ENCODE measurements at regions of chr17 and their contacts with region 1.

Region 1: DNA sequence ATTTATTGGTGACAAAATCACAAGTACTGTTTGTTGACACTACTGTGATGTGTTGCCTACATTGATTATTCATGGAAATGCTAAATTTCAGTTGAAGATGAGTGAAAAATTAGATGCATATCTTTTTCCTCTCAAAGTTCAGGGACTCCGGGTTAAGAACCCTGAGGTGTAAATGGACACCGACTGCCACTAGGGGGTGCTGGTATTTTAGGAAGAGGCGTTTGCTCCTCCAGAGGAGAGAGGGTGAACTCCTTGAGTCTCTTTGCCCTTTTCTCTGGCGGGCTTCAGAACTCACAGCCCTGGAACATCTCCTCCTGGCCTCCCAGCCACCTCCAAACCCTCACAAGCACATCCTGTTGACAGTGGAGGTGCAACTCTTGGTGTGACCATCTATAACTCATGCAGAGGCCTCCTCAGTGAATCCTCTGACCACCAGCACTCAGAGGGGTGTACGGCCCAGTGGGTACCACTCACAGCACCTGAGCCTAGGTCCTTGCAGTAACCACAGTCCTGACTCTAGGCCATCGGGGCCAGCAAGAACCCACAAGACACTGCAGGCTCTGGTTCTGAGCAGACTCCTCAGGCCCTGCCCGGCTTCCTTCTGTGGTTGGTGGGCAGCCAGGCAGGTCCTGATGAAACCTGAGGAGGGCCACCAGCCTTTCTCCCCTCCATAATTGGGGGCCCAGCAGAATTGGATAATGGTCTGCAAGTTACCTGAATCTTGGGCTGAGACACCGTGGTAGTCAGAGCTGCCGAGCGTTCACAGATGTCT is 26.2 kb upstream of the PIK3R5 start:
- DNase-seq: no peak
- ATAC-seq: peak; percentile 63

Region 2: DNA sequence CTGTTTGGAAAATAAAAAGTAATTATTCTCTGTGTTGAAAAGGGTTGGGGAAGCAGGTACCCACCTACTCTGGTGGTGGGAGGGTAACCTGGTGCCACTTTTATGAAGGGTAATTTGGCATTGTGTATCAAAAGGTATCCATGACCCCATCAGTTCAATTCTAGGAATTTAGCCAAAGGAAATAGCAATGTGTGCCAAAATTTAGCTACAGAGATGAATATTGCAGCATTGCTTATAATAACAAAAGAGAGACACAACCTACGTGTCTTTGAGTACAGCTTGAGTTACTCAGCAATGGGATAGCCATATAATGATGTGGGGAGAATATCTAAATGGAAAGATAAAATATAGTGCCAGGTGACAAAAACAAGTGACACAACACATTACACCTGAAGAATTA is 200.3 kb after region 1 on chr17:
- intact Hi-C with region 1: no loop called
- DNase-seq: no peak
- ATAC-seq: no peak

Region 3: DNA sequence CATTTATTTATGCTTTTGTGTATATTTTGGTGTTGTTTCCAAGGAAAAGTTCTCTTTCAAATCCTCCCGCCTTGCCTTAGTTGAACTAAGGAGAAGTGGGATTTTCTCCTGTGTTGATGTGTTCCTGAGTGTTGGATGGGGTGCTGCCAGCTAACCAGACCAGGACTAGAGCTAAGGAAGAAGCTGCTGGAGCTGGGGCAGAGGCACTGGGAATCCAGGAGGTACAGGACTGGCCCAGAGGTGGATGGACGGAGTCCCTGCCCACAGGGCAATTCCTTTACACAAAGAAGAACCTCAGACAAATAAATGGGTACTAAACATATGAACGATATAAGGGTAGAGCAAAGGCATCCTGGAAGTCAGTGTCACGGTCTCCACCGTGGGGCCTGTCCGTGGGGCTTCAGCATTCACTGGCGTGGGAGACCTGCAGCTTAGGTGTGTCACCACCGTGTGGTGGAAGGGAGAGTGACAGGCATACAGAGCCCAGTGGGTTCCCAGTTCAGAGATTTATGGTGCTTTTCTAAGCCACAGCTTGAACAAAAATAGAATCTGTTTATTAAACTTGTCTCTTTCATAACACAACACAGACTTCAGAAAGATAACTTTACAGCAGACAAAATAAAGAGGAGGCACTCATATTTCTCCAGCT is 300.3 kb after region 1 on chr17:
- intact Hi-C with region 1: loop called (anchors 2 kb)
- DNase-seq: peak; percentile 70
- ATAC-seq: peak; percentile 86

Measured in Right ventricle myocardium inferior (tissue), 1 donor.